A673 (cell line): ENCODE measurements at regions of chr2 and their contacts with region 1.

Region 1: DNA sequence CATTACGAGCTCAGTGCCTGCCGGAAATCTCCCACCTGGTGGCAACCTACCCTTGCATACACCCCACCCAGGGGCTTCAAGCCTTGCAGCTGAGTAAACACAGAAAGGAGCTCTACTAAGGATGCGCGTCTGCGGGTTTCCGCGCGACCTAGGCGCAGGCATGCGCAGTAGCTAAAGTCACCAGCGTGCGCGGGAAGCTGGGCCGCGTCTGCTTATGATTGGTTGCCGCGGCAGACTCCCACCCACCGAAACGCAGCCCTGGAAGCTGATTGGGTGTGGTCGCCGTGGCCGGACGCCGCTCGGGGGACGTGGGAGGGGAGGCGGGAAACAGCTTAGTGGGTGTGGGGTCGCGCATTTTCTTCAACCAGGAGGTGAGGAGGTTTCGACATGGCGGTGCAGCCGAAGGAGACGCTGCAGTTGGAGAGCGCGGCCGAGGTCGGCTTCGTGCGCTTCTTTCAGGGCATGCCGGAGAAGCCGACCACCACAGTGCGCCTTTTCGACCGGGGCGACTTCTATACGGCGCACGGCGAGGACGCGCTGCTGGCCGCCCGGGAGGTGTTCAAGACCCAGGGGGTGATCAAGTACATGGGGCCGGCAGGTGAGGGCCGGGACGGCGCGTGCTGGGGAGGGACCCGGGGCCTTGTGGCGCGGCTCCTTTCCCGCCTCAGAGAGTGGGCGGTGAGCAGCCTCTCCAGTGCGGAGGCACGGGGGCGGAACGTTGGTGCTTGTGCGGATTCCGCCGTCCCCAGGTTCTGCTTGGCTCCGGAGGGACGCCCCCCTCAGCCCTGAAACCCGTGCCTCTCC is at the start of gene MSH2:
- DNase-seq: peak; percentile 96
- H3K4me3 ChIP-seq: peak within 1 kb of the TSS; percentile 86
- H3K27ac ChIP-seq: peak within 1 kb of the TSS; percentile 89
- H3K4me1 ChIP-seq: no peaks in the 10 kb centered on the region
- H3K27me3 ChIP-seq: no peaks in the 10 kb centered on the region
- CTCF ChIP-seq: no peak
- total RNA-seq, gene MSH2: 82.4 and 83.7 TPM in 2 replicates

Region 2: DNA sequence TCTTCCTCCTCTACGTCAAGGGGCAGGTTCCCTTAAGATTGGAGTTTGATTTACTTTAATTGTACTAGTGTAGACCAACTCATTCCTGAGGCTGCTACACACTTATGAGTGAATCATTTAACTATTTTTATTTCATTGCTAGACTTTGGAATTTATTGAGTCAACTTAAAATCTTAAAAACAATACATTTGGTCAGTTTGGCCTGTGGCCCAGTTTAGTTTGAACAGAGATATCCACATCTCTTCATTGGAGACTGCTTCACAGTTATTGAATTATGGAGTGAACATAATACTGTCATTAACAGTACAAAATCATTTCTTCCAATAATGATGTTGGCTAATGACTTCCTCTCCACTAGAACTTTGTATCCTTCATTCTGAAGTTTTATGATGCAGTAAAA is 213.4 kb before region 1 on chr2:
- CTCF ChIA-PET with region 1: interaction called, 10 read pairs
- POLR2A ChIA-PET with region 1: no interaction called
- intact Hi-C with region 1: no loop called
- DNase-seq: no peak
- H3K4me3 ChIP-seq: no peak overlapping the region
- H3K27ac ChIP-seq: peak overlapping the region; percentile 18
- H3K4me1 ChIP-seq: peaks cover 74% of the 10 kb centered on the region
- H3K27me3 ChIP-seq: no peaks in the 10 kb centered on the region
- CTCF ChIP-seq: no peak

Region 3: GRCh38 chr2:47386551-47386950 is 16.5 kb before region 1 on chr2:
- CTCF ChIA-PET with region 1: interaction called, 14 read pairs
- POLR2A ChIA-PET with region 1: no interaction called
- intact Hi-C with region 1: no loop called
- DNase-seq: no peak
- H3K4me3 ChIP-seq: no peak overlapping the region
- H3K27ac ChIP-seq: no peak overlapping the region
- H3K4me1 ChIP-seq: no peaks in the 10 kb centered on the region
- H3K27me3 ChIP-seq: no peaks in the 10 kb centered on the region
- CTCF ChIP-seq: no peak